Head of caudate nucleus (tissue), 42 donors: ENCODE measurements at regions of chr4 and their contacts with region 1.

Region 1: GRCh38 chr4:36218121-36218520 is 26.2 kb downstream of the ARAP2 start:
- DNase-seq: no peak

Region 2: DNA sequence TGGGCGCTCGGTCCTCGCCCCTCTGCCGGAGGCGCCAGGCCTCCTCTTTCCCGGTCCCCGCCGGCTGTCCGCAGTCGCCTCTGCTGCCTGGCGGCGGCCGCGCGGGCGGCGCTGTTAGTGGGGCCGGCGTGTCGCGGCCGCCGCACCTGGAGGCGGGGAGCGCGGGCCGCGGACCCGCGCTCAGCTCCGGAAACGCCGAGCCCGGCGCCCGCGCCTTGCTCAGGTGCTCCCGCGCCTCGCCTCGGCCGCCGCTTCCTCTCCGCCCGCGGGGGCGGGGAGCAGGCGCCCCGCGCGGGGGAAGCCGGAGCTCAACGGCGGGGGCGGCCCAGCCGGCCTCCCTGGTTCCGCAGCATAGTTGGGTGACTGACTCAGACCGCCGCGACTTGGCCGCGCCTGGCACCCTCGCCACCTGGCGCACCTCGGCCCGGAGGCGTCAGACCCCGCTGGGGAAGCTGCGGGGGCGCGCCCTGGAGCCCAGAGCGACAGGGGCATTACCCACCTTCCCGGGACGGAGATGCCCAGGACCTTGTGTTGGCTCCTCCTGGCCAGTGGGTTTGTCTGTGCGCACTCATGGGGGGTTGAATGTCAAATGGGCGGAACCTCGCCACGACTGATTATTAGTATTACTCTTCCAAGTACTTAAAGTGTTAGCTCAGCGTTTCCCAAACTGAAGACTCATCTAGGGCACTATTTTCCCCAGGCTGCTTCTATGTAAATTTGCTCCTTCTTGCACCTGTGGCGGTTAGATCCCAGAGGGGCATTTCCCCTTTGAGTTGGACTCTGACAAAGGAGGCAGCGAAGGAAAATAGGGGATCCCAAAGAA is 26.3 kb after region 1 on chr4 and contains the start of gene ARAP2:
- intact Hi-C with region 1: loop called (anchors 2 kb)
- DNase-seq: peak in 40 of 42 donors; percentile 37 to 82 (median 65)